ENCODE measurements at regions of chr6 and their contacts with region 1.

Region 1: DNA sequence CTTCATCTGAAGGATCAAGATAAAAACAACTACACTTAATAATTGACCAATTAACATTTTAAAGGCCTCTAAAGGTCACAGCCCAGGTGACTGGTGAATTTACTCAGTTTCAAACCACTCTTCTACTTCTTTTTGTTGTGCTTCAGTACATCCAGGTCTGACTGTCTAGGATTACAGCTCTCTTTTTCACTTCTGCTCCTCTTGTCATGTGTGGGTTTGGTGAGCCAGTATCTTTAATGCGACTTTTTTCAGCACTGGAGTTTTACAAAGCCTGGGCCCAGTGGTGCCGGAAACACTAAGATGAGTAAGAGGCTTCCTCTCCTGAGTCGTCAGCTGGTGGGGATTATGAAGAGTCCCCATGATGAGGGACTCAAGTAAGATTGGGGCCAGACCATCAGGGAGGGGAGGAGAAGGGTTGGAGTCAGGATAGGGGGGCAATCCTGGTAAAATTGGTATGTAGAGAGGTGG is 27.0 kb downstream of the HECA start:
- DNase-seq: peak; percentile 36
- ATAC-seq: peak; percentile 95
- H3K4me3 Mint-ChIP-seq: peak overlapping the region; percentile 66
- H3K27ac Mint-ChIP-seq: peak overlapping the region; percentile 94
- H3K4me1 Mint-ChIP-seq: peaks cover 77% of the 10 kb centered on the region
- H3K27me3 Mint-ChIP-seq: no peaks in the 10 kb centered on the region
- CTCF ChIP-seq: no peak

Region 2: GRCh38 chr6:139146317-139146726 is 15.5 kb before region 1 on chr6:
- CTCF ChIA-PET with region 1: interaction called, 3 read pairs
- POLR2A ChIA-PET with region 1: interaction called, 6 read pairs
- intact Hi-C with region 1: loop called (anchors 2 kb)
- DNase-seq: no peak
- ATAC-seq: peak; percentile 28
- H3K4me3 Mint-ChIP-seq: no peak overlapping the region
- H3K27ac Mint-ChIP-seq: no peak overlapping the region
- H3K4me1 Mint-ChIP-seq: peaks cover 87% of the 10 kb centered on the region
- H3K27me3 Mint-ChIP-seq: no peaks in the 10 kb centered on the region
- CTCF ChIP-seq: no peak

Region 3: GRCh38 chr6:139173172-139173571 is 11.3 kb after region 1 on chr6:
- CTCF ChIA-PET with region 1: no interaction called
- POLR2A ChIA-PET with region 1: interaction called, 3 read pairs
- intact Hi-C with region 1: loop called (anchors 1 kb)
- DNase-seq: no peak
- ATAC-seq: peak; percentile 72
- H3K4me3 Mint-ChIP-seq: no peak overlapping the region
- H3K27ac Mint-ChIP-seq: peak overlapping the region; percentile 46
- H3K4me1 Mint-ChIP-seq: peaks cover 71% of the 10 kb centered on the region
- H3K27me3 Mint-ChIP-seq: no peaks in the 10 kb centered on the region
- CTCF ChIP-seq: no peak

Measured in activated B cell treated with CpG ODN at 0.5 μM for 24 hours (primary cell).